Natural killer cell (primary cell): ENCODE measurements at regions of chr21 and their contacts with region 1.

Region 1: DNA sequence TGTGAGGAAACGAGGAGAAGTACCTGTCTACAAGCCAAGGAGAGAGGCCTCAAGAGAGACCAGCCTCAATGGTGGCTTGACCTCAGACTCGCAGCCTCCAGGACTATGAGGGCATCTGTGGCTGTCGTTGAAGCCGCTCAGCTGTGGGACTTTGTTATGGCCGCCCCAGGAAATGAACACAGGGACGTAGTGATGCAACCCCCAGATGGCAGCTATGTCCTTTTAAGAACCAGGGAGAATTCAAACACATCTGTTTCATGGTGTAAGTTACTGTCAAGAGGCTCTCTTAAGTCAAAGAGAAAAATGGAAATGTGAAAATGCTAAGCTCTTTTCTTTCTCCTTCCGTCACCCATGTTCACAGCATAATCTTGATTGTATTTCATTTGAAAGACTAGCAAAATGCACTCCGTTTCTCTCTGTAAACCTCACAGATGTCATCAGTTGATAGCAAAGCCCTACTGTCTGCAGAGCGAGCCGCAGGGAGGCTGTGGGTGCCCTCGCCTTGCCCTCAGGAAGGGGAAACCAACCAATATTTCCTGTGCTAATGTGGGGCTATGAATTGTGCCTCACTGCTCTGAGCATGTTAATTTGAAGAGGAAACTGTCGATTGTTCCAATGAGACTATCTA is 21.3 kb downstream of the UBASH3A start:
- DNase-seq: peak; percentile 79 to 92
- ATAC-seq: peak; percentile 69 to 89 (median 89)
- H3K4me3 ChIP-seq: no peak overlapping the region
- H3K4me3 Mint-ChIP-seq: peak overlapping the region; percentile 83
- H3K27ac ChIP-seq: peak overlapping the region; percentile 74
- H3K27ac Mint-ChIP-seq: peak overlapping the region; percentile 68 to 76
- H3K4me1 ChIP-seq: peaks cover 63% of the 10 kb centered on the region
- H3K4me1 Mint-ChIP-seq: peaks cover 71% of the 10 kb centered on the region in 2 donors
- H3K27me3 ChIP-seq: peaks cover 34% of the 10 kb centered on the region
- H3K27me3 Mint-ChIP-seq: peaks cover 46 to 60% of the 10 kb centered on the region in 2 donors
- CTCF ChIP-seq: no peak

Region 2: GRCh38 chr21:42193131-42193671 is 231.8 kb before region 1 on chr21:
- intact Hi-C with region 1: loop called (anchors 2 kb)
- DNase-seq: peak; percentile 68 to 74
- ATAC-seq: peak; percentile 31 to 49 (median 40)
- H3K4me3 ChIP-seq: no peak overlapping the region
- H3K4me3 Mint-ChIP-seq: peak overlapping the region; percentile 88
- H3K27ac ChIP-seq: peak overlapping the region; percentile 24
- H3K27ac Mint-ChIP-seq: peak overlapping the region; percentile 75 to 91
- H3K4me1 ChIP-seq: peaks cover 74% of the 10 kb centered on the region
- H3K4me1 Mint-ChIP-seq: peaks cover 60 to 70% of the 10 kb centered on the region in 2 donors
- H3K27me3 ChIP-seq: no peaks in the 10 kb centered on the region
- H3K27me3 Mint-ChIP-seq: no peaks in the 10 kb centered on the region
- CTCF ChIP-seq: no peak

Region 3: DNA sequence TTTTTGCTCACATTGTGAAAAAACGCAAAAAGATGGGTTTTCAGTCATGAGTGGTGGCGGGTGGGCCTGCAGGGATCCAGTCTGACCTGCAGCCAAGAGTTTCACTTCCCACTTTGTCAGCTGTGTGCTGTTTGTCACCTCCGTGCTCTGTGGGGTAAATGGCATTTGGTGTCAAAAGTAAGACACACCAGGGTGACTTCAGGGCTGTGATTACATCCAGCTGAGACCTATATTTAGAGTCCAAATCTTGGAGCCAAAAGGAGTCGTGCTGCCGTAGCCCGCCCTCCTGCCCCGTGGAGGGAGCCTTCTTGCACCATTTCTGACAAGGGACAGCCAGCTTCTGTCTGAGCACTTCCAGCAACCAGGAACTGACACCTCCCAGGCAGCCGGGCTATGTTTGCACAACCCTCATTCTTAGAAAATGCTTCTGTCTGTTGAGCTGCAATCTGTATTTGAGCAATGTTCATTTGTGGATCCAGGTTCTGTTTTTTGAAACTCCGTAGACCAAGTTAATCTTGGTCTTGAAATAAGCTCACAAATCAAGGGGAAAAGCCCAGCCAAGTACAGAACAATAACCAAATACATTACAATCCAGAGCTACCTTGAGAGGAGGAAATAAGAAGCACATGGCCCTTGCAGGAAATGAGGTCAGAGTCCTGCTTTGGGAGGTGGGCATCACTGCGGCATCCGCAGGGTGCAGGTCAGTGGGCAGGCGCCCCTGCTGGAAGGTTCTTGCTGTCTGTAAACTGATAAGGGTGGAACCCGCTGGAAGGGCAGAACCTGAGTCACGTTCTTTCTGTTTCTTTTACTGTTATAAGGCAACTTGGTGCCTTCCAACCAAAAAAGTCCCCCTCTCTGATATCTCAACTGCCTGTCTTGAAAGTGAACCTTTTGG is 191.7 kb before region 1 on chr21:
- intact Hi-C with region 1: loop called (anchors 2 kb)
- DNase-seq: peak; percentile 76 to 93
- ATAC-seq: peak; percentile 62 to 82 (median 67)
- H3K4me3 ChIP-seq: no peak overlapping the region
- H3K4me3 Mint-ChIP-seq: peak overlapping the region; percentile 83
- H3K27ac ChIP-seq: peak overlapping the region; percentile 89
- H3K27ac Mint-ChIP-seq: peak overlapping the region; percentile 89 to 93
- H3K4me1 ChIP-seq: peaks cover 92% of the 10 kb centered on the region
- H3K4me1 Mint-ChIP-seq: peaks cover 63 to 75% of the 10 kb centered on the region in 2 donors
- H3K27me3 ChIP-seq: no peaks in the 10 kb centered on the region
- H3K27me3 Mint-ChIP-seq: no peaks in the 10 kb centered on the region
- CTCF ChIP-seq: peak; percentile 68

Region 4: GRCh38 chr21:42366321-42367009 is 58.6 kb before region 1 on chr21 and contains the start of gene TFF1:
- intact Hi-C with region 1: no loop called
- DNase-seq: no peak
- ATAC-seq: no peak
- H3K4me3 ChIP-seq: no peak within 1 kb of the TSS
- H3K4me3 Mint-ChIP-seq: no peak within 1 kb of the TSS
- H3K27ac ChIP-seq: no peak within 1 kb of the TSS
- H3K27ac Mint-ChIP-seq: no peak within 1 kb of the TSS
- H3K4me1 ChIP-seq: no peaks in the 10 kb centered on the region
- H3K4me1 Mint-ChIP-seq: peaks cover 0 to 9% of the 10 kb centered on the region in 2 donors
- H3K27me3 ChIP-seq: peaks cover 3% of the 10 kb centered on the region
- H3K27me3 Mint-ChIP-seq: peaks cover 31 to 36% of the 10 kb centered on the region in 2 donors
- CTCF ChIP-seq: no peak
- total RNA-seq, gene TFF1: not detected

Region 5: DNA sequence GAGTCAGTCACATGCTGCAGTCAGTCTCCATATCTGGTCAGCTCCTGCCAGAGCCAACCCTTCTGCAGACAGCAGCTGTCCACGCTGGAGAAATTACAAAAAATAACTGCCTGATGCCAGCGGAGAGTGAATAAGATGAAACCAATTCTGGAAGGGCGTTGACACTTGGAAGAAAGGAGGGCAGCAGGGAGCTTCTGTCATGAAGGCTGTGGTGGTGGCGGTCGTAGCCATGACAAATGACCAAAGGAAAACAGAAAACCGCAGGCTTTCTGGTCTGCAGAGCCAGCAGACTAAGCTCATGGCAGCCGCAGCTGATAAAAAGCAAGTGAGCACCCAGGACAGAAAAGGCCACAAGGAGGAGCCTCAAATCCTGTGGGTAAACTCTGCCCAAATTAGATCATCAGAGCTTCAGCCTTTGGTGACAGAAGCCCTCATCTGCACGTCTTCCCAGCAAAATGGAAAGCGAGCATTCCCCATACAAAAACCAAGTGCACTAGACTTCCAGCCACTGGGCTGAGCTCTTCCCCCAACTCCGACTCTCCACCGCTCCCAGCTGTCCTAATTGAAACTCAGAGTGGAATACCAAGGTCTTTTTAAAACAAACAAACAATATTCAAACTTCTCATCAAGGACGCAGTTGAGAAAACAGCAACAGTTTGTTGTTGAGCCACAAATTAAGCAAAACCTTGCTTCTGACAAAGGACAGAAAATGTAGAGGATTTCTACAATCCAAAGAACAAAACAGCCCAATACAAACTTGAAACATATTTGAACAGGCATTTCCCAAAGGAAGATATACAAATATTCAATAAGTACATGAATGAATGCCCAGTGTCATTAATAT is 42.3 kb after region 1 on chr21:
- intact Hi-C with region 1: loop called (anchors 2 kb)
- DNase-seq: peak in 1 of 2 donors; percentile 55
- ATAC-seq: no peak
- H3K4me3 ChIP-seq: no peak overlapping the region
- H3K4me3 Mint-ChIP-seq: no peak overlapping the region
- H3K27ac ChIP-seq: no peak overlapping the region
- H3K27ac Mint-ChIP-seq: peak overlapping the region; percentile 10 to 30
- H3K4me1 ChIP-seq: peaks cover 36% of the 10 kb centered on the region
- H3K4me1 Mint-ChIP-seq: peaks cover 42 to 43% of the 10 kb centered on the region in 2 donors
- H3K27me3 ChIP-seq: no peaks in the 10 kb centered on the region
- H3K27me3 Mint-ChIP-seq: peaks cover 19 to 28% of the 10 kb centered on the region in 2 donors
- CTCF ChIP-seq: no peak

Region 6: DNA sequence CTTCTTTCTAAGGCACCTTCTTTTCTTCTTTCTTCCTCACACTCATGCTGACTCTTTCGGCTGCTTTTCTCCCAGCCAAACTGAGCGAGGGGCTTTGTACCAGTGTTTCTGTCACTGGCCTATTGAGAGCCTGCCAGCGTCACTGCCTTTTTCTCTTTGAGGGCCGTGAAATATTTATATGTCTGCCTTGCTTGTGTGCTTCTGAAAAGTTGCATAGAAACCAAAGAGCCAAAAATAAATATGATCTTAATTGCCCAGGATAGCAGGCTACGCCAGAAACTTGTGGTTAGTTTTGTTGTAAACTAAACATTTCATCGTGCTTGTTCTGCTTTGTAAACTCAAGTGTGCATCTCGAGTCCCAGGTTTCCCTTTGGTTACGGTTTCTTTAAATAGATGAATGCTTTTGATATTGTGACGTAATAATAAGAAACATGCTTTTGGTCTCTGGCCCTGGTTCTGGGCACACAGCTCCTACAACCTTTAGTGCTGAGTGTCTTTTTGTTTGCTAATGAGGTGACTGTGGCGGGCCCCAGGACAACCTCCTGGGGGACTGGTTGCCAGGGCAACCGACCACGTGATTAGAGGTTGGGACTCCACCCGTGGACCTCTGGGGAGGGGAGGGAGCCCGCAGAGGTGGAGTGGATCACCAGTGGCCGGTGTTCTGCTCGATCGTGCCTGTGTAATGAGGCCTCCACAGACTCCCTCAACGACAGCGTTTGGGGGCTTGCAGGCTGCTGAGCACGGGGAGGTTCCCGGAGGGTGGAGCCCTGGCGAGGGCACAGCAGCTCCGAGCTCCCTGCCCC is 99.5 kb after region 1 on chr21:
- intact Hi-C with region 1: loop called (anchors 10 kb)
- DNase-seq: peak; percentile 69 to 71
- ATAC-seq: peak; percentile 73 to 83 (median 78)
- H3K4me3 ChIP-seq: peak overlapping the region; percentile 7
- H3K4me3 Mint-ChIP-seq: peak overlapping the region; percentile 89
- H3K27ac ChIP-seq: peak overlapping the region; percentile 85
- H3K27ac Mint-ChIP-seq: peak overlapping the region; percentile 91 to 94
- H3K4me1 ChIP-seq: peaks cover 34% of the 10 kb centered on the region
- H3K4me1 Mint-ChIP-seq: peaks cover 33 to 46% of the 10 kb centered on the region in 2 donors
- H3K27me3 ChIP-seq: no peaks in the 10 kb centered on the region
- H3K27me3 Mint-ChIP-seq: no peaks in the 10 kb centered on the region
- CTCF ChIP-seq: no peak

Region 7: DNA sequence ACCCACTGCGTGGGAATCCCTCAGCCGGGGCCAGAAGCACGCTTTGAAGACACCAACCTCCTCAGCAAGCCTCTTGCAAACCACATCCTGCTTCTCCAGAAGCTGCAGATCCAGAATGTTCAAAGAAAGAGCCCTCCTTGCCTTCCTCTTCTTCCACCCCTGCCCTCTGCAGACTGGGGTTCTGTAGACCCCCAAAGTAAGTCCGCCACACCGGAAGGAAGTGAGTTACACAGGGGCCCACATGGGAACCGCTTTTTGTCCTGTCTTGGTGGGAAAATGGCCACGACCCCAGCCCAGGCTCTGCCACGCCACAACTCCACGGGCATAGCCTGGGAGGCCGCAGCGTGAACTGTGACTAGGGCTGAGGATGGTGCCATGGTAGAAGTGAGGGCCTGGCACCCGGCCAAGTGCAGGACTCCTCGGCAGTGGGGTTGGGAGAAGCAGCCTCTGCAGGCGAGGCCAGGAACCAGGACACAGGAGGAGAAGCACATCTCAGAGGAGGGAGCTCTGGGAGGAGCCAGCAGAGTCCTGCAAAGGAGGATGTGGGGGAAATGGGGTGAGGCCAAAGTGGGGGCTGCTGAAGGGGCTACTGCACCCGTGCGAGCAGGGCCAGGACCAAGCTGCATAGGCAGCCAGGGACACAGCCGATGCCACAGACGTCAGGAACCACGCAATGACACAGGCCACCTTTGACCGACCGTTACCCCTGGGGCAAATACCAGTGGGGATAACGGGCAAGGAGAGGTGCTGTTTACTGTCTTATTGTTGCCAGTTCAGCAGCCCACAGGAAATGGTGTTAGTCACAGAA is 259.3 kb after region 1 on chr21:
- intact Hi-C with region 1: loop called (anchors 10 kb)
- DNase-seq: peak; percentile 57 to 69
- ATAC-seq: peak; percentile 77 to 81 (median 78)
- H3K4me3 ChIP-seq: no peak overlapping the region
- H3K4me3 Mint-ChIP-seq: peak overlapping the region; percentile 85
- H3K27ac ChIP-seq: peak overlapping the region; percentile 65
- H3K27ac Mint-ChIP-seq: peak overlapping the region; percentile 83 to 94
- H3K4me1 ChIP-seq: peaks cover 58% of the 10 kb centered on the region
- H3K4me1 Mint-ChIP-seq: peaks cover 42 to 44% of the 10 kb centered on the region in 2 donors
- H3K27me3 ChIP-seq: peaks cover 2% of the 10 kb centered on the region
- H3K27me3 Mint-ChIP-seq: peaks cover 0 to 4% of the 10 kb centered on the region in 2 donors
- CTCF ChIP-seq: no peak